Right ventricle myocardium superior (tissue), 1 donor: ENCODE measurements at regions of chr1 and their contacts with region 1.

Region 1: DNA sequence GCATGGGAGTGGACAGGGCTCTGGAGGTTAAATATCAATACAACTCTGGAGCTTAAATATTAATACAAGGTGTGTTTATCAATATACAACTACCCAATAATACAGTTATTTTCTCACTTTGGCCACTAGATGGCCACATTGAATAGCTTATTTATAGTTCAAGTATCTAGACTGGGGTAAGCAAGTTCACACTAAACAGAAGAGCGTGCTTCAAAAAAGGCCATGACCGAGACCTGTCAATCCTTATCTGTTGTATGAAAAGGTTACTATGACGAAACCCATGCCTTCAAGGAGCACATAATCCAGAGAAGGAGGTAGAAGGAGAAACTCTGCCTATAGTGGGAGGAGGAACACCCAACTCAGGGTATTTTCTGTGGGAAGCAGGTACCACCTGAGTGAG is 29.1 kb downstream of the CHML start:
- DNase-seq: no peak
- ATAC-seq: peak; percentile 96

Region 2: DNA sequence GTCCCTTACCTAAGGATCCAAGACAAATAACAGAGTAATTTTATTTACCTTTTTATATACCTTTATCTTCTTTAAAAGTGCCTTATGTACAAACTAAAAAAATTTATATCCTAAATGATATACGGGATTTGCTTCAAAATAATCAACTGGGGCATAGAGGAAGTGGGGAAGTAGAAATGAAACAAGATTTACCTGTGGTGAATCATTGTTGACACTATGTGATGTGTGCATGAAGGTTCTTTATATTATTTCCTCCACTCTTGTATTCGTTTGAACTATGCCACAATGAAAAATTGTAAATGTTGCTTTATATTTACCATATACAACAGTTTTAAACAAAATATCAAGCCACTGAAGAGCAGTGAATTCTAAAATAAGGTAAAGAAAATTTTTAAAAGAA is 267.1 kb before region 1 on chr1:
- intact Hi-C with region 1: no loop called
- DNase-seq: no peak
- ATAC-seq: no peak

Region 3: DNA sequence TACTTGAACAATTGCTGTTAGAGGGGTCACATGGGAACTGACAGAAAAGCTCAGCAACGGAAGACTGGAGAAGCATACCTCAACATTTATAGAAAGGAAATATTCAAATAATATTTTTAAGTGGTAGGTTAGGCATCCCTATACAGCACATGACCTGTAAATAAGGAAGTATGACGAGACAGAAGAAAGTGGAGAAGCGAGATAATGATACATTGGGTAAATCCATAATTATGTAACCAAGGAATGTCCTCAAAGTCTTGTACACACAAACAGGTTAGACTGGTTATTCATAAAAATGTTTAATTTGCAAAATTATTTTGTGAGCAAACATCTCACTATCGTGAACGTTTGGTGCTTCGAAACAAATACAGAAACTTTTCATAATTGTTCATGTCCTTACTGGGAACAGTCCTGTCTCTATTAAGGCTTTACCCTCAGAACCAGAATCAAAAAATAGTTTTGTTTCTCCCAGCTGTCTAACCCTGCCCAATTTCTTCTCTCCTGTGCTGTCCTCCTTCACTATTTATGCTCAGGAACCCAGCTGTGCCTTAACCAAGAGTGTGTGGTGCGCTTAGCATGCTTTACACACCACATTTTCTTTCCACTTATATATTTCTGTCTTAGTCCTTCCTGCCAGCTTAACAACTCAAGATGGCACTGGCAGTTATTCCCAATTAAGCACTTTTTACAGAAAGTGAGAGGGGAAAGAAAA is 68.7 kb before region 1 on chr1:
- intact Hi-C with region 1: no loop called
- DNase-seq: no peak
- ATAC-seq: no peak

Region 4: GRCh38 chr1:241834733-241835377 is 223.8 kb after region 1 on chr1:
- intact Hi-C with region 1: loop called (anchors 10 kb)
- DNase-seq: no peak
- ATAC-seq: no peak

Region 5: DNA sequence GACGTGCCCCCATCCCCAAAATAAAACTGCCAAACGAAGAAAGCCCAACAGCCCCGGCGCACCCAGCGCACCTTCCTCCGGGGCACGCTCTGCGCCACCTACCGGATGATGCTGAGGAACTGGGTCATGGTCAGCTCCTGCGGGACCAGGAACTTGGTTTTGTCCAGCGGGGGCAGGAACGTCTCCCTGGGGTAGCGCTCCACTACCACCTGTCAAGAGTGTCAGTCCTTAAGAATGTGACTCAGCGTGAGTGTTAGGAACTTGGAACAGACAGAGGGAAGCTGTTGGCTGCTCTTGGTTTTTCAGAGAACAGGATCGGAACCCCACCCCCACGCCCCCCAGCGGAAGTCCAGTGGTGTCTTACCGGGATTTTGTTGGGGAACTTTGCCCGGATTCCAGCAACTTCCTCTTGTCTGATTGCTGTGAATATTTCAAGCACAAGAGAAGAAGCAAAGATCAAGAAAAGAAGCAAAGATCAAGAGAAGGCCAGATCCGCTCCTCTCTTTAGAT is 387.4 kb after region 1 on chr1:
- intact Hi-C with region 1: loop called (anchors 10 kb)
- DNase-seq: peak; percentile 81
- ATAC-seq: peak; percentile 91